ENCODE measurements at regions of chr10 and their contacts with region 1.

Region 1: GRCh38 chr10:118698421-118698820 is 56.3 kb downstream of the CACUL1 start:
- DNase-seq: peak; percentile 74
- H3K4me3 Mint-ChIP-seq: peak overlapping the region; percentile 34
- H3K27ac Mint-ChIP-seq: no peak overlapping the region
- H3K4me1 Mint-ChIP-seq: peaks cover 33% of the 10 kb centered on the region
- H3K27me3 Mint-ChIP-seq: no peaks in the 10 kb centered on the region

Region 2: DNA sequence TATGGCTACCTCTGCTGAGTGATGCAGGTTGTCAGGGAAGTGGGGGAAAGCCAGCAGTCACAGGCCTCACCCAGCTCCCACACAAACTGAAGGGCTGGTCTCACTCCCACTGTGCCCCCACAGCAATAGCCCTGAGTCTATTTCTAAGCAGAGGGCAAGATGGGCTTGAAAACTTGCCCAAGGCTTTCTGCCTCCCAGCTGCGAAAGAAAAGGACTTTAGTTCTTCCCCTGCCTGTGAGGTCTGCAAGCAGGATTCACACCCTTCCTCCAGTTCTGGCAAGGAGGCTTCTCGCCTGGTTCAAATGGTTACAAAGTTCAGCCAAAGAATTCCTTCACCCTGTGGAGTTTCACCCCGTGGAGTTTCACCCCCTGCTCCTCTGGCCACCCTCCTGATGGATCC is 39.7 kb before region 1 on chr10:
- intact Hi-C with region 1: no loop called
- DNase-seq: no peak
- H3K4me3 Mint-ChIP-seq: no peak overlapping the region
- H3K27ac Mint-ChIP-seq: no peak overlapping the region
- H3K4me1 Mint-ChIP-seq: peaks cover 18% of the 10 kb centered on the region
- H3K27me3 Mint-ChIP-seq: peaks cover 7% of the 10 kb centered on the region

Region 3: DNA sequence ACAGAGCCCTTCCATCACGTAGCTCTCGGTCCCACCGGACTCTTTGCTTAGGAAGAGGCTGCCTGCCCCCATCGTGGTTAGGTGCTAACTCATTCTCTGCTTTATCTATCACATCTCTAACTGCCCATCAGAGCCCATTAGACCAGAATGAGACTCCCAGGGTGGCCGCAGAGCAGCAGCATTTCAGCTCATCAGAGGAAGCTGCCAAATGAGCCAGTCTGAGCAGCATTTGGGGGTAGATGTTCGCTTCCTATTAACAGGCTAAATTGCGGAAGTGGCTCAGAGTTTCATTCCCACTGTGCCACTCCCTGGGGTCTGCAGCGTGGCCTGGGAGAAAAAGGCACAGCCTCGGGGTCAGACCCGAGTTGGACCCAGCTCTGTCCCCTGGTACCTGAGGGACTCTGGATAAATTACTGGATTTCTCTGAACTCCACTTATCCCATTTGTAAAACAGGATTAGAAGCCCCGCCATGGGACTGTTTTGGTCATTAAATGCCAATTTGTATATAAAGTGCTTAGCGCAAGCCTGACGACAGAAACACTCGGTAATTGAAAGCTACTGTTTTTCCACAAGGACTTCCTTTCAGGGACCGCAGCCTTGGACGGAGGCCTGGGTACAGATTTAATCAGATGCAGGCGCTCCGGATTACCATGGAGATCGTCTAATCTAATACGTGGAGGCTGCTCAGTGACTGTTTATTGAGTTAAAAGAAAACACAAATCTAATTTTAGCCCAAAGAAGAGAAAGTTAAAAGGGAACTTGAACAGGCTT is 29.2 kb before region 1 on chr10:
- intact Hi-C with region 1: no loop called
- DNase-seq: no peak
- H3K4me3 Mint-ChIP-seq: no peak overlapping the region
- H3K27ac Mint-ChIP-seq: no peak overlapping the region
- H3K4me1 Mint-ChIP-seq: no peaks in the 10 kb centered on the region
- H3K27me3 Mint-ChIP-seq: no peaks in the 10 kb centered on the region

Region 4: DNA sequence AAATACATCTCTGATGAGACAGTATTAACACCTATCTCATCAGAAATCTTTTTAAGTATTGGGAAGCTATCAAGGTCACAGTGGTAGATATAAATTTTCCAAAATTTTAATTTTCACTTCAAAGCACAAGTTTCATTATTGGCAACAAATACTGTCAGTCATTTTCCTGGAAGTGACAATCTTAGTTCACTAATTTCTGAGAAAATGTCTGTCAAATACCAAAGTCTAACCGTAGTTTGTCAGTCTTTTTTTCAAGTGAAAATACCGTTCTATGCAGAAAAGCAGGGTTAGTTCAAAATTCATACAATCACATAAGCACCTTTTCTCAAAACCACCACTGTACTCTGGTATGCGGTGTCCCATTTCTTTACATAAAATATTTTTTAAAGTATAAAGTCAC is 15.9 kb after region 1 on chr10:
- intact Hi-C with region 1: loop called (anchors 1 kb)
- DNase-seq: no peak
- H3K4me3 Mint-ChIP-seq: no peak overlapping the region
- H3K27ac Mint-ChIP-seq: peak overlapping the region; percentile 40
- H3K4me1 Mint-ChIP-seq: peaks cover 31% of the 10 kb centered on the region
- H3K27me3 Mint-ChIP-seq: no peaks in the 10 kb centered on the region

Measured in activated T-helper 1 cell treated with anti-CD3 and anti-CD28 coated beads, Interleukin-12 subunit alpha, Interleukin-12 subunit beta, Interleukin-2, Interleukin-4 antibody, amounts not matched to agents 30 ng/mL and 10 ng/mL and 1 ng/mL, durations not matched to agents 14 hours and 24 hours and 36 hours (primary cell).